GM13977 (cell line): ENCODE measurements at regions of chr1 and their contacts with region 1.

Region 1: DNA sequence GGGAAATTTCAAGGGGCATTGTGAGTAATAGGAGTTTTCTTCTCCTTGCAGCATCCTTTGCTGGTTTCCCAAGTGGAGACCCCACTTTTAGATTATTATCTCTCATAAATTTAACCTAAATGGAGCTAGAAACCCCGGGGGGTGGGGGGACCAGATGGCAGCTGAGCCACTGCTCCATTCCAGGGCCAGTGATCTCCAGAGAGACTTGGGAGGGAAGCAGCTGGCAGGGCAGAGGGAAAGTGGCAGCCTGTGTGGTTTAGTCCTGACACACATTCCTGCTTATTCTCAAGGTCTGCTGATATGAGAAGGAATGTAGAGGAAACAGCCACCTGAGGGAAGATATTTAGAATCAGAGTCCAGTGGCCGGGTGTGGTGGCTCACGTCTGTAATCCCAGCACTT is 16.3 kb downstream of the PCP4L1 start:
- DNase-seq: no peak
- CTCF ChIP-seq: no peak

Region 2: GRCh38 chr1:161165742-161166668 is 108.9 kb before region 1 on chr1 and contains the start of gene PPOX:
- in situ Hi-C with region 1: no loop called
- DNase-seq: peak; percentile 91
- CTCF ChIP-seq: peak; percentile 54

Region 3: DNA sequence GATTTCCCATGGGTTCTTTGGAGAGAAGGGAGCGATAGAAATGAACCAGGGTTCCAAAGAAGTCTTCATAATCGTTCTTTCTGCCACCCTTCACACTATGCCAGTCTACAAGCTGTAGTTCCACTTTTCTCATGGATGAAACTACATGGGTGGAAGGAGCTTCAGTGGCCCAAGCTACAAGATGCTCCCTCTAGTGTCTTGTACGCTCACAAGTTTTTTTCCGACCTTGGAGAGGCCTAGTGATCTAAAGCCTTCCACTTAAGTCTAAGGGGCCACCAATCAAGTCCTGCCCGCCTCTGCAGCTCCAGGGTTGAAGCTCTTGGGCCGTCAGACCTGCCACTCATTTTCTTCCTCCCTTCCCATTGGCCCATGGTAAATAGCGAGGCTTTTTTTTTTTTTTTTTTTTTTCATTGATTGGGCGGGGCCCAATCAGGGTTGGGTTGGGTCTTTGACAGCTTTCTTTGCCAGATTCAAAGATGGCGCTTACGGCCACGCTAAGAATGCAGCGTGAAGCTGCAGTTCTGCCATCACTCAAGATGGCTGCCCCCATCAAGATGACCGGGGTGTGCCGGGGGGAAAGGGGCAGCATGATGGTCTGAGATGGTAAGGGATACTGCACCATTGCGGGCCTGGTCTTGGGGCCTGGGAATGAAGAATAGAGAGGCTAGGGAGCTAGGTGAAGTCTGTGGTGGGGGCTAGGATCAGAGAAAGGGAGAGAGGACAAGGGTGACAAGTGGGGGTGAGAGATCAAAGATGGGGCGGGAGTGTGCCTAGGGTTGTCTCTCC is 49.1 kb before region 1 on chr1 and contains the start of gene TOMM40L:
- in situ Hi-C with region 1: loop called (anchors 10 kb)
- DNase-seq: peak; percentile 94
- CTCF ChIP-seq: peak; percentile 59